Stomach (tissue), 19 donors: ENCODE measurements at regions of chr6 and their contacts with region 1.

Region 1: GRCh38 chr6:157184202-157185020 is 138.9 kb downstream of the TMEM242 start:
- DNase-seq: peak; percentile 85 to 90
- H3K4me3 ChIP-seq: no peak overlapping the region
- H3K27ac ChIP-seq: peak overlapping the region in 4 of 5 donors; percentile 1 to 54 (median 37)
- H3K4me1 ChIP-seq: peaks cover 20 to 59% (median 38%) of the 10 kb centered on the region in 4 donors
- H3K27me3 ChIP-seq: no peaks in the 10 kb centered on the region
- CTCF ChIP-seq: peak in 5 of 7 experiments; percentile 86 to 97 (median 93)
- EP300 ChIP-seq: no peak
- POLR2A ChIP-seq: no peak

Region 2: GRCh38 chr6:156890627-156891314 is 293.6 kb before region 1 on chr6:
- intact Hi-C with region 1: no loop called
- DNase-seq: no peak
- H3K4me3 ChIP-seq: no peak overlapping the region
- H3K27ac ChIP-seq: no peak overlapping the region
- H3K4me1 ChIP-seq: peaks cover 6 to 63% (median 45%) of the 10 kb centered on the region in 4 donors
- H3K27me3 ChIP-seq: no peaks in the 10 kb centered on the region
- CTCF ChIP-seq: no peak
- EP300 ChIP-seq: no peak
- POLR2A ChIP-seq: no peak

Region 3: GRCh38 chr6:157034436-157035230 is 149.8 kb before region 1 on chr6:
- intact Hi-C with region 1: loop called (anchors 10 kb)
- DNase-seq: peak in 1 of 2 donors; percentile 79
- H3K4me3 ChIP-seq: no peak overlapping the region
- H3K27ac ChIP-seq: peak overlapping the region in 3 of 5 donors; percentile 72 to 80 (median 77)
- H3K4me1 ChIP-seq: peaks cover 20 to 57% (median 38%) of the 10 kb centered on the region in 4 donors
- H3K27me3 ChIP-seq: no peaks in the 10 kb centered on the region
- CTCF ChIP-seq: peak in 5 of 7 experiments; percentile 37 to 68 (median 56)
- EP300 ChIP-seq: no peak
- POLR2A ChIP-seq: no peak

Region 4: DNA sequence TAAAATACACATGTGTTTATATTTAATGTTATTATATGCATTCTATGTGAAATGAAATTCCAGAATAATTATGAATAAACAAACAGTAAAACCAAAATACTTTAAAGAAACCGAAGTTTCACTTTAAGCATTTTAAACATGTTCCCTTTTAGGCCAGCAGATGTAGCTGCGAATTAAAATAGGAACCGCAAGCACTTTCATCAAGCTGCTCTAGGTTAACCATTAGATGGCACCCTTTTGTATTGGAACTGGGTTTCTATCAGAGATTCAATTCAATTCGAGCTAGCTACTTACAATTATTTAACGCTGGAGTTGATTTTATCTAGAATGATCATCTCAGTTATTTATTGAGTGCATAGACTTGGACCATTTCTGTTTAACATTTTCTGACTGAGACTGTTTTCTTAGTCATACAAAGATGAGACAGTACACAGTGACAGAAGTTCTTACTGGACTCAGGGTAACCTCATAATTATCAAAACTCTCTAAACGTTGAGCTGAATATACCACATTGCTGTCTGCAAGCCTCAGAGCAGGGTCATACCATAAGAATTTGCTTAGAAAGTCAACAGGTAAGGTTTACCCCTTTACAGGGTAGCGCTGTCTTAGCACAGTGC is 130.4 kb after region 1 on chr6:
- intact Hi-C with region 1: no loop called
- DNase-seq: peak in 1 of 2 donors; percentile 85
- H3K4me3 ChIP-seq: no peak overlapping the region
- H3K27ac ChIP-seq: peak overlapping the region in 2 of 5 donors; percentile 20 to 22
- H3K4me1 ChIP-seq: peaks cover 6 to 25% (median 14%) of the 10 kb centered on the region in 4 donors
- H3K27me3 ChIP-seq: no peaks in the 10 kb centered on the region
- CTCF ChIP-seq: peak in 5 of 7 experiments; percentile 60 to 87 (median 72)
- EP300 ChIP-seq: no peak
- POLR2A ChIP-seq: no peak